ENCODE measurements at regions of chr10 and their contacts with region 1.

Region 1: GRCh38 chr10:74589226-74589673 is 237.2 kb upstream of the KAT6B start:
- DNase-seq: peak; percentile 95
- H3K4me3 Mint-ChIP-seq: peak overlapping the region; percentile 27
- H3K27ac Mint-ChIP-seq: peak overlapping the region; percentile 68
- H3K4me1 Mint-ChIP-seq: peaks cover 47% of the 10 kb centered on the region
- H3K27me3 Mint-ChIP-seq: no peaks in the 10 kb centered on the region

Region 2: GRCh38 chr10:73644015-73644743 is 945.1 kb before region 1 on chr10:
- CTCF ChIA-PET with region 1: no interaction called
- intact Hi-C with region 1: no loop called
- DNase-seq: peak; percentile 63
- H3K4me3 Mint-ChIP-seq: no peak overlapping the region
- H3K27ac Mint-ChIP-seq: no peak overlapping the region
- H3K4me1 Mint-ChIP-seq: peaks cover 15% of the 10 kb centered on the region
- H3K27me3 Mint-ChIP-seq: peaks cover 8% of the 10 kb centered on the region

Region 3: GRCh38 chr10:73931767-73932619 is 657.3 kb before region 1 on chr10:
- CTCF ChIA-PET with region 1: no interaction called
- intact Hi-C with region 1: loop called (anchors 2 kb)
- DNase-seq: peak; percentile 92
- H3K4me3 Mint-ChIP-seq: no peak overlapping the region
- H3K27ac Mint-ChIP-seq: peak overlapping the region; percentile 83
- H3K4me1 Mint-ChIP-seq: peaks cover 15% of the 10 kb centered on the region
- H3K27me3 Mint-ChIP-seq: peaks cover 7% of the 10 kb centered on the region

Region 4: DNA sequence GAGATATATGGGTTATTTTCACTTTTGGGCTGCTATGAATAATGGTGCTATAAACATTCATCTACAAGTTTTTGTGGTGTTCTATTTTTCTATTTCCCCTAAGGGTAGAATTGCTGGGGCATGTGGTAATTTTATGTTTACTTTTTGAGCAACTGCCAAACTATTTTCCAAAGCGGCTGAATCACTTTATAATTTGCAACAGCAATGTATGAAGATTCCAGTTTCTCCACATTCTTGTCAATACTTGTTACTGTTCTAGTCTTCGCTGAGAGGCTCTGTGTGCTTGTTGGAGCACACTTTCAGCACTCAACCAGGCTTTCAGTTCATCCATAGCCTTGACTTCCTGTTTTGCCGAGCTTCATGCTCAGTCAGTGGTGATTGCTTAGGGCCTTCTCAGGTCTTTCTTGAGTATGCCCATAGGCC is 399.2 kb before region 1 on chr10:
- CTCF ChIA-PET with region 1: no interaction called
- intact Hi-C with region 1: loop called (anchors 5 kb)
- DNase-seq: peak; percentile 49
- H3K4me3 Mint-ChIP-seq: peak overlapping the region; percentile 58
- H3K27ac Mint-ChIP-seq: peak overlapping the region; percentile 88
- H3K4me1 Mint-ChIP-seq: peaks cover 57% of the 10 kb centered on the region
- H3K27me3 Mint-ChIP-seq: no peaks in the 10 kb centered on the region

Region 5: GRCh38 chr10:74460812-74461211 is 128.4 kb before region 1 on chr10:
- CTCF ChIA-PET with region 1: no interaction called
- intact Hi-C with region 1: no loop called
- DNase-seq: no peak
- H3K4me3 Mint-ChIP-seq: no peak overlapping the region
- H3K27ac Mint-ChIP-seq: no peak overlapping the region
- H3K4me1 Mint-ChIP-seq: peaks cover 3% of the 10 kb centered on the region
- H3K27me3 Mint-ChIP-seq: no peaks in the 10 kb centered on the region

Region 6: GRCh38 chr10:74799721-74800221 is 210.5 kb after region 1 on chr10:
- CTCF ChIA-PET with region 1: no interaction called
- intact Hi-C with region 1: loop called (anchors 2 kb)
- DNase-seq: peak; percentile 62
- H3K4me3 Mint-ChIP-seq: no peak overlapping the region
- H3K27ac Mint-ChIP-seq: no peak overlapping the region
- H3K4me1 Mint-ChIP-seq: peaks cover 13% of the 10 kb centered on the region
- H3K27me3 Mint-ChIP-seq: no peaks in the 10 kb centered on the region

Region 7: DNA sequence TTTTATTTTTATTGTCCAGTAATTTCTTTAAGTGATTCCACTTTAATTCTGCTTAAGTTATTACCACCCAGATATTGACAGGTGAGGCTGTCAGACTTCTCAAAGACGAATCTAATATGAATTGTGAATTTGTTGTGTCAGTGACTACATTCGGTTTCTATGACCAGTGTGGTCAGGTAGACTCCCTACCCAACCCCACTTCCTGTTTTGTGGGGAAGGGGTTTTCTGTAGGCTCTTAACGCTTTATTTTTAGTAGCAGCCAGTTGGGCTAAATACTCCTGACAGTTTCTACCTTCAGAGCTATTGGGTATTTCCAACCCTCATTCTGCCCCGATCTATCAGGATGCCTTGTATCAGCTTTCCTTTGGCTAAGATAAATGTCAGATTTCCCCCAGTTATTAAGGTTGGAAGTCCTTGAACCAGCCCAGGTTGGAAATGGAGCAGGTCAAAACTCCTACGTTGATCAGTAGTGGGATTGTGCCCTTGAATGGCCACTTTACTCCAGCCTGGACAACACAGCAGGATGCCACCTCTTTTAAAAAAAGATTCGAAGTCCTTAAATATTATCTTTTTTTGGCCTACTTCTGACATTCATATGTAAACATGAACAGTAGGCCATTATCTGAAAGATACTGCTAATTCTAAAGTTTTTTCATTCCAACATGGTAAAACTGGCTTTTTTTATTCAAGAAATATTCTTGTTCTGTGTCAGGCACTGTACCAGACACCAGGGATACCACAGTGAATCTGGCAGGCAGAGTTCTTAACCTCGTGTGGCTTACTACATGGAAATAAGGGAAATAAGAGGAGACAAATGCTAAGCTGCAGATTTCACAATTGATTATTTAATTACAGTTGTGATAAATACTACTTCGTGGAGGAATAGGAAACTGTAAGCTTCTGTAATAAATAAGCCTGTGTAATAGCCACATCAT is 388.9 kb after region 1 on chr10:
- CTCF ChIA-PET with region 1: no interaction called
- intact Hi-C with region 1: loop called (anchors 1 kb)
- DNase-seq: peak; percentile 84
- H3K4me3 Mint-ChIP-seq: peak overlapping the region; percentile 9
- H3K27ac Mint-ChIP-seq: peak overlapping the region; percentile 72
- H3K4me1 Mint-ChIP-seq: peaks cover 36% of the 10 kb centered on the region
- H3K27me3 Mint-ChIP-seq: no peaks in the 10 kb centered on the region

Region 8: DNA sequence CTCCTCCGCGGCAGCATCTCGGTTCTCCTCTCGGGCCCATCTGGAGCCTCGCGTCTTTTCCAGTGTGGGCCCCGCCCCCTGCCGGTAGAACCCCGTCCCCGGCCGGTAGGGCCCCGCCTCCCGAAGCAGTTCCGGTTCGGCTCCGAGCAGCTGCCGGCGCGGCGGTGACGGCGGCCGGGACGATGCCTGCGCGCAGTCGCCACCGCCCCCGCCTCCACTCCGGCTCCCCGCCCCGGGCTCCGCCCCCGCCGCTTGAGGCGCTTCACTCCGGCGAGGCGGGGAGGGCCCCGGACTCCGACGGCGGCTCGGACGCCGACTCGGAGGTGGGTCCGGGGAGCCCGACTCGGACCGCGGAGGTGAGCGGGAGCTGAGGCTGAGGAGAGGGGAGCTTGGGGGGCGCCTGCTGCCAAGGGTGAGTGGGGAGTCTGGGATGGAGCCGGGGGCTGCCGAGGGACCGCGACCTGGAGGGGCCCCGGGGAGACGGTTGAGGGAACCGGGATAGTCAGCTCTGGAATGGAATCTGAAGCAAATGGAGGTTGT is 522.2 kb after region 1 on chr10 and contains the start of gene SAMD8:
- CTCF ChIA-PET with region 1: no interaction called
- intact Hi-C with region 1: loop called (anchors 2 kb)
- DNase-seq: peak; percentile 98
- H3K4me3 Mint-ChIP-seq: peak within 1 kb of the TSS; percentile 95
- H3K27ac Mint-ChIP-seq: peak within 1 kb of the TSS; percentile 97
- H3K4me1 Mint-ChIP-seq: peaks cover 44% of the 10 kb centered on the region
- H3K27me3 Mint-ChIP-seq: no peaks in the 10 kb centered on the region
- total RNA-seq, gene SAMD8: 15.3 to 16.9 TPM

Region 9: DNA sequence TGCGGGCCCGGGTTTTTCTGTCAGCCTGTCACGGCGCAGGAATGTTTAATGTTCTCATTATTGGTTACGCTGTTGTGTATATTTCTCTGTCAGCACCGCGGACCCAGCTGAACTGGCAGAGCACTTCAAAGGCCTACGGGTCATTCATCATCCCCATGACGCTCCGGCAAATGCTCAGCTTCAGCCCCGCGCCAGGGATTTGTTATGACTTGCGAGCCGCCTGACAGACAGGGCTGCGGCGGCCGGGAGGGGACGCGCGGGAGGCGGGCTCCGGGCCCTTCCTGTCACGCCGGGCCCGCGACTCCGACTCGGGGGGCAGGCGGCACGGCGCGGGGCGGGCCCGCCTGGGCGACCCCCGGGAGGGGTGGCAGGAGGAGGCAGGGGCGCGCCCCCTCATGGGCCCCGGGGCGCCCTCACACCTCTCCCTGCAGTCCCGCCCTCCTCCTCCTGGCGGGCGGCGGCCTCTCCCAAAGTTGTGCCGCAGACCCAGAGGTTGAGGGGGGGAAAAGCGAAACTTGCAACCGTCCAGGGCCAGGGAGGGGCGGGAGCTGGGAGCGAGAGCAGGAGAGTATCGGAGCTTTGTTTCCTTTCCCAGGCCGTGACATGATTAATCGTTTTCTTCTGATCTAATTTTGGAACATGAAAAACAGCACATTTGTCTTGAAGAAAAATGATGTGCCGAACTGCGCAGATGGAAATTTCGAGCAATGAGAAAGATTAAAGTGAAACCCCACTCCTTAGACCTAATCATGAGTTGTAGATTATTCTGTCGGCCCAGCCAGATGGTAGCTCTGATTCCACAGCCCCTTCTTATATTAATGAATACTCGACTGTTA is 705.8 kb after region 1 on chr10:
- CTCF ChIA-PET with region 1: no interaction called
- intact Hi-C with region 1: loop called (anchors 1 kb)
- DNase-seq: peak; percentile 93
- H3K4me3 Mint-ChIP-seq: peak overlapping the region; percentile 57
- H3K27ac Mint-ChIP-seq: no peak overlapping the region
- H3K4me1 Mint-ChIP-seq: peaks cover 5% of the 10 kb centered on the region
- H3K27me3 Mint-ChIP-seq: peaks cover 4% of the 10 kb centered on the region

Measured in activated naive CD4-positive, alpha-beta T cell treated with anti-CD3 and anti-CD28 coated beads for 36 hours (primary cell).